Posterior cingulate gyrus (tissue), 11 donors: ENCODE measurements at regions of chr20 and their contacts with region 1.

Region 1: GRCh38 chr20:39264506-39265172 is 302.5 kb downstream of the DHX35 start:
- DNase-seq: peak in 9 of 10 donors; percentile 25 to 93 (median 63)

Region 2: DNA sequence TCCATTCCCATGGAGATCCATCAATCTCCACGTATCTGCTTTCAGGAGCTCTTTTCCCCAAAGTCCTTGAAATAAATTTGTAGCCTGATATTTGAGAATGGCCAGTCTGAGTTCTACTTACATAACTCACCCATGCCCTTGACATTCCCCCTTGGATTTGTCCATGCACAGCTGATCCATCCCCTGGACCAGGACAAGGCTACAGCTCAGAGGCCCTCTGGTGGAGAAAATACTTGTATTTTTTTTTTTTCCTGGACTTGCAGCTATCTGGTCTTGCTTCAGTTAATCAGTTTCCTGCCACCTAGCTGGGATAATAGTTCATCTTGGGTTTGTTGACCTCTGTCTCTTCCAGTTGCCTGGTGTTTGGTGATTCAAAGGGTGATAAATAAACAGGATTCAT is 165.1 kb after region 1 on chr20:
- intact Hi-C with region 1: loop called (anchors 1 kb)
- DNase-seq: no peak

Region 3: DNA sequence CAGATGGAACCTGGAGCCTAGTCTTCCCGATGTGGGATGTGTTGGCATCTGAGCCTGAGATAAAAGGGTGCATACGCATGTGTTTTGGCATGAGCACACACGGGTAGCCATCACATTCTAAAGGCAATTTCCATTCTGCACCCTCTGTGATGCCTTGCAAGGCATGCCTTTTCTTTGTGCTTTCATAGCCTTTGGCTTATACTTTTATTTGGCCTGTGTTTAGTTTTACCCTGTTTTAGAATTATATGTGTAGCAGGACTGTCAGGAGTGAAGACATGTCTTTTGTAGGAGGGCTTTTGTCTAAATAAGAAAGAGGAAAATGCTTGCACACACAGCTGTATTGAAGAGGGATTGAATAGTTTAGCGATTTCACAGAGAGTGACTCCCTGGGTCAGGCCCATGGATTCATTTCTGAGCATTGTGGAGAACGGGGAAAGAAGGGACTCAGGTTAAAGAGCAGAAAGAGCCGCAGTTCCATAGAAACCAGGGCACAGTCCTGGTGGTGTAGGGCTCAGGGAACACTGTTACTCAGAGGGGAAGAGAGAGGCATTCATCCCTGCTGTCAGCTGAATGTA is 227.7 kb after region 1 on chr20:
- intact Hi-C with region 1: no loop called
- DNase-seq: no peak

Region 4: DNA sequence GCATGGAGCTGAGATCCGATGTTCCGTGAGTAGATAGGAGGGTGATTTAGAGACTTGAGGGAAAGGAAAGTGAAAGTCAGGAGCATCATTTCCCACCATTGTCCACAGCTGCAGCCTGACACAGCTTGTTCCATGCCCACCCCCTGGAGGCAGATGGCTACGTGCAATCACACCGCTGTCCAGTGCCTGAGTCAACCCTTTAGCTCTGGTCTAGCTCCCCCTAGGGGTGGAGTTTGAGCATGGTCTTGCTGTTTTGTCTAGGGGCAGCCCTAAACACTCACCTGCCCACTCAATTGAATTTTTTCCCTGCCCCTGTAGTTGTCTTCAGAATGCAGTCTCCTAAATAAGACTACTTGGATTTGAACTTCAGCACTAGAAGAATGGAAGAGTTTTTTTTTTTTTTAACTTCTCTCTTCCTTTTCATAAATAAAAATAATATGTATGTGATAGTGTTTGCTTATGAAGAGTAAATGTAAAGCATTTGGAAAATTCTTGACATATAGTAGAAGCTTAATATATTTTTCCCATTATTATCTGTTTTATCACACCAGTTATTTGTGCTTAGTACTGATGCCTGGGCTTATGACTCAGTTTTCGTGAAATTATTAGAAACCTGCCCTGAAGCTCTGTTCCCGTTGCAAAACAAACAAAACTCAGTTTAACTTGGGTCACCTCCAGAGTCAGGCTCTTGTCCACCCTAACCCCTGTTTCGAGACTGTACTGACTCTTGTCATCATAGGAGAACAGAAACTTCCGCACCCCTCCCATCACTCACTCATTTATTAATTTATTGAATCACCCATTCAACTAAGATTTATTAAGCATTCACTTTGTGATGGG is 609.6 kb after region 1 on chr20:
- intact Hi-C with region 1: loop called (anchors 5 kb)
- DNase-seq: peak in 6 of 10 donors; percentile 16 to 83 (median 49)

Region 5: DNA sequence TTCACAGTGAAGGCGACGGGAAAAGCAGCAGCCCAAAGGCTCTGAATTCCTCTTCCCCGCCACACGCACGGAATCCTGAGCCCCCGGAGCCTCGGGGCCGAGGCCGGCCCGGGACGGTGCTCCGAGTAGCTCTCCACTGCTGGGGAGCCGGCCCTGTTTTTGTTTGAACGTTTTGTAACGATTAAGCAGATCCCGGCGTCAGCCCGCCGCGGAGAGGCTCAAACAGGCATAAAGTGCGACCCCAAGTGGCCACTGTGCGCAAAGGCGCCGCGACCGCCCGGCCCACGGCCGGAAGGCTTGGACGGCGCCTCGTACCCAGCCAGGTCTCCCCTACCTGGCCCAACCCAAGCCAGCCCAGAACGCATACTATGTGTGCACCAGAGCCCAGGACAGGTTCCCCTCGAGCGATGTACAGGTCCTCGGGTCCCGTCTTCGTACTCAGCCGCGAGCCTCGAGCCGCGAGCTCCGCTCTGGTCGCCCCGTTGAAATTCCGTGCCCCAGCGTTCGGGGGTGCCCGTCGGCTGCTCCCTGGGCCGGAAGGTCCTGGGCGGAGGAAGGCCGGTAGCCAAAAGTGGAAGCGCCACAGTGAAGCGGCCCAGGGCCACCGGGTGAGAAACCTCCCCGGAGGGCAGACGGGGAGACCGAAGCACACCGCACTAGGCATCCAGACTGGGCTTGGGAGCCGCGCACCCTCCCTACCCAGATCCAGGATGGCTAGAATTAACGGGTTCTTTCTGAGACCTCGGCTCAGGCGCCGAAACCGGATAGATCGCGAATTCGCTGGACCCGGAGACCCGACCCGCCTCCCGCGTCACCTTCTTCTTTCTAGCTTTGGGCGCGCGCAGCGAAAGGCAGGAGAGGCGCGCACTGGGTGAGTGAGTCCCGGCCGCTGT is 1425.5 kb after region 1 on chr20:
- intact Hi-C with region 1: loop called (anchors 5 kb)
- DNase-seq: peak; percentile 81 to 98 (median 90)

Region 6: DNA sequence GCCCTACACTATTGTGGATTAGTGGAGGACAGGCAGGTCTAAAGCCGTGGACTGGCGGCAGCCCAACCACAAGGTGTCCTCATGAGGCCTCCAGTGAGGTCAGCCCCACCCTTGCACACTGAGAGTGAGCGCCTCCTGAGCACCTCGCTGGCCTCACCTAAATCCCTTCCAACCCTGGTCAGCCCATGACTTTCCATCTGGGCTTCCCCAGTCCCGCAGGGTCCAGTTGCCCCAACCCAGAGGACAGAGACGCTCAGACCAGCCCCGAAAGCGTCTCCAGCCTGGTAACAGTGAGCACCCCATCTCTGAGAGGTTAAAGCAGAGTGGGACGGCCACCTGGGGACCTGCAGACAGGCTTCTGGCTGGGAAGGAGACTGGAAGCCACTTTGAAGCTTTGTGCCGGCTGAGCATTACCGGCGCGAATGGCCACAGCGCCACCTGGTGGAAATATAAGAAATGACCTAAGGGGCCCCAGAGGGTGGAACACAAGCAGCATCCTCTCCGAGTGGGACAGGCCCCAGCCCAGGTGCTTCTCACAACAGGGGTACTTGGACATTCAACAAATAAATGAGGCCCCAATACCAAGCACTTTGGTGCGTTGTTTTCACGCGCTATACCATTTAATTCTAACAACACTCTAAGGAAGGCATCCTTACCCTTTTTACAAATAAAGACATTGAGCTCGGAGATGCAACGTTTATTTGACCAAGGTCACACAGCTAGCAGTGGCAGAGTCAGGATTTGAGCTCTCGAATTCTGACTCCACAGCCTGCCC is 1698.3 kb after region 1 on chr20:
- intact Hi-C with region 1: loop called (anchors 10 kb)
- DNase-seq: peak; percentile 39 to 95 (median 75)